ENCODE measurements at regions of chr20 and their contacts with region 1.

Region 1: DNA sequence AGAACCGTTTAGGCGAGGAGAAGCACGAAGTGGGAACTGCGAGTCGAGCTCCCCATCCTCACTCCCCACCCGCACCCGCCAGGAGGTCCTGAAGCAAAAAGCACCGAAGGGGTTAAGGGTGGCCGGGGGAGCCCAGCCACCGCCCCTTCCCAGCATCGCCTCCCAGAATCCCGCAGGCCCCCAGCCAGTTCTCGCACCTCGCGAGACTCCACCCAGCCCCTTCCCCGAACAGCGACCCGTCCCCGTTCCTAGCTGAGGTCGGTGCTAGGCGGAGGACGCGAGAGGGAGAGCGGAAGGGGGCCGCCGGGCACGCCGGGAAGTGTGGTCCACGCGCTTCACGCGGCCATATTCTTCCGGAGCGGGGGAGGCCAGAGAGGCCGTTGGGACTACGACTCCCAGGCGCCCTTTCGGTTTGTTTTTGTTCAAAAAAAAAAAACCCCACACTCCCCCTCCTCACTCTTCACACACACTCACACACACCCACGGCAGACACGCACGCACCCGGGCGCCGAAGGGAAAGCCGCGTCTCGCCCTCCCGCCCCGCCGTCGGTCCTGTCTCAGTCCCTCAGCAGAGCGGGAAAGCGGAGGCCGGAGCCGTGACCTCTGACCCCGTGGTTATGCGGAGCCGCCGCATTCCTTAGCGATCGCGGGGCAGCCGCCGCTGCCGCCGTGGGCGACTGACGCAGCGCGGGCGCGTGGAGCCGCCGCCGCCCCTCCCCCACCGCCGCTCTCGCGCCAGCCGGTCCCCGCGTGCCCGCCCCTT is at the start of gene ASXL1:
- DNase-seq: peak; percentile 98 to 99 (median 99)
- ATAC-seq: peak; percentile 97 to 98 (median 98)
- H3K4me3 ChIP-seq: peak within 1 kb of the TSS; percentile 64 to 97 (median 82)
- H3K27ac ChIP-seq: peak within 1 kb of the TSS; percentile 95 to 100 (median 98)
- H3K4me1 ChIP-seq: peaks cover 0 to 65% (median 23%) of the 10 kb centered on the region in 12 donors
- H3K27me3 ChIP-seq: no peaks in the 10 kb centered on the region
- CTCF ChIP-seq: peak in 3 of 12 donors; percentile 4 to 14 (median 11)
- POLR2A ChIP-seq: peak in 1 of 2 donors; percentile 69
- total RNA-seq, gene ASXL1: 16.8 to 50.1 (median 27.1) TPM

Region 2: GRCh38 chr20:32277361-32278198 is 80.5 kb before region 1 on chr20 and contains the start of gene KIF3B:
- intact Hi-C with region 1: loop called in 1 of 10 experiments (anchors 5 kb)
- DNase-seq: peak; percentile 90 to 93 (median 92)
- ATAC-seq: peak; percentile 88 to 97 (median 96)
- H3K4me3 ChIP-seq: peak within 1 kb of the TSS; percentile 70 to 99 (median 92)
- H3K27ac ChIP-seq: peak within 1 kb of the TSS; percentile 25 to 88 (median 80)
- H3K4me1 ChIP-seq: peaks cover 0 to 26% (median 18%) of the 10 kb centered on the region in 12 donors
- H3K27me3 ChIP-seq: no peaks in the 10 kb centered on the region
- CTCF ChIP-seq: no peak
- POLR2A ChIP-seq: peak in 1 of 2 donors; percentile 70
- total RNA-seq, gene KIF3B: 9.6 to 17.8 (median 11.4) TPM

Region 3: GRCh38 chr20:32296819-32297420 is 61.1 kb before region 1 on chr20:
- intact Hi-C with region 1: no loop called
- DNase-seq: no peak
- ATAC-seq: no peak
- H3K4me3 ChIP-seq: no peak overlapping the region
- H3K27ac ChIP-seq: no peak overlapping the region
- H3K4me1 ChIP-seq: peaks cover 0 to 14% (median 4%) of the 10 kb centered on the region in 12 donors
- H3K27me3 ChIP-seq: no peaks in the 10 kb centered on the region
- CTCF ChIP-seq: no peak
- POLR2A ChIP-seq: no peak

Region 4: GRCh38 chr20:32336918-32337347 is 21.1 kb before region 1 on chr20:
- intact Hi-C with region 1: loop called in 1 of 10 experiments (anchors 2 kb)
- DNase-seq: no peak
- ATAC-seq: no peak
- H3K4me3 ChIP-seq: no peak overlapping the region
- H3K27ac ChIP-seq: no peak overlapping the region
- H3K4me1 ChIP-seq: peaks cover 4 to 46% (median 28%) of the 10 kb centered on the region in 12 donors
- H3K27me3 ChIP-seq: no peaks in the 10 kb centered on the region
- CTCF ChIP-seq: peak; percentile 30 to 67 (median 49)
- POLR2A ChIP-seq: no peak

Region 5: DNA sequence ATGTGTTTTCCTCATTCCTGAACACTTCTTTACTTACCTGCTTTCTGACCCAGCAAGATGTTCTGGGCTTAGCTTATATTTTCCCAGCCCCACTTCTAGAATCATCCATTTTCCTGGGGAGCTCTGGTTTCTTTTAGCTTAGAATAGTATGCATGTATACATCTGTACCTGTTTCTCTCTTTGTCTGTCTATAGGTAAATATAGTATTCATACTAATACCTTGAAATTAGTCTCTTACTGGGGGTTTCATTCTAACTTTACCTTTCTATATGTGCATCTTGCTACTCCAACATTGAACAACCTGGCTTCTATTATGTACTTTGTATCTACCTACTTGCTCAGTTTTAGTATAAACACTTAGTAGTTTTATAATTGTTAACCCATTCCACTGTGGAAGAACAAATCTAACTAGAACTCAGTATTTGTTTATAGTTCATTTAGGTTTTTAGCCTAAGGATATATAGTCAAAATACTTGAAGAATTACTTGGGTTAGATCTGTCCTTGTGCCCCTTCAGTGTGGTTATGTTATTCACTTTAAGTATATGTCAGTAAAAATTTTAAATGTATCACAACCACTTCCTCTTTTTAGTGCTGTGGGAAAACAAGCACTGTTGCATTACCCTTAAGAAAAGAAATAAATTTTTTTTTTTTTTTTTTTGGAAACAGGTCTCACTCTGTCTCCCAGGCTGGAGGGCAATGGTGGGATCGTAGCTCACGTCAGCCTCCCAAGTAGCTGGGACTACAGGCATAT is 54.1 kb after region 1 on chr20:
- intact Hi-C with region 1: no loop called
- DNase-seq: no peak
- ATAC-seq: no peak
- H3K4me3 ChIP-seq: no peak overlapping the region
- H3K27ac ChIP-seq: no peak overlapping the region
- H3K4me1 ChIP-seq: peaks cover 0 to 18% (median 2%) of the 10 kb centered on the region in 12 donors
- H3K27me3 ChIP-seq: no peaks in the 10 kb centered on the region
- CTCF ChIP-seq: no peak
- POLR2A ChIP-seq: no peak

Region 6: GRCh38 chr20:32437391-32438074 is 79.5 kb after region 1 on chr20:
- intact Hi-C with region 1: loop called in 2 of 10 experiments (anchors 5 to 10 kb)
- DNase-seq: no peak
- ATAC-seq: no peak
- H3K4me3 ChIP-seq: no peak overlapping the region
- H3K27ac ChIP-seq: no peak overlapping the region
- H3K4me1 ChIP-seq: peaks cover 4 to 20% (median 14%) of the 10 kb centered on the region in 12 donors
- H3K27me3 ChIP-seq: no peaks in the 10 kb centered on the region
- CTCF ChIP-seq: peak in 1 of 12 donors; percentile 13
- POLR2A ChIP-seq: no peak

Region 7: DNA sequence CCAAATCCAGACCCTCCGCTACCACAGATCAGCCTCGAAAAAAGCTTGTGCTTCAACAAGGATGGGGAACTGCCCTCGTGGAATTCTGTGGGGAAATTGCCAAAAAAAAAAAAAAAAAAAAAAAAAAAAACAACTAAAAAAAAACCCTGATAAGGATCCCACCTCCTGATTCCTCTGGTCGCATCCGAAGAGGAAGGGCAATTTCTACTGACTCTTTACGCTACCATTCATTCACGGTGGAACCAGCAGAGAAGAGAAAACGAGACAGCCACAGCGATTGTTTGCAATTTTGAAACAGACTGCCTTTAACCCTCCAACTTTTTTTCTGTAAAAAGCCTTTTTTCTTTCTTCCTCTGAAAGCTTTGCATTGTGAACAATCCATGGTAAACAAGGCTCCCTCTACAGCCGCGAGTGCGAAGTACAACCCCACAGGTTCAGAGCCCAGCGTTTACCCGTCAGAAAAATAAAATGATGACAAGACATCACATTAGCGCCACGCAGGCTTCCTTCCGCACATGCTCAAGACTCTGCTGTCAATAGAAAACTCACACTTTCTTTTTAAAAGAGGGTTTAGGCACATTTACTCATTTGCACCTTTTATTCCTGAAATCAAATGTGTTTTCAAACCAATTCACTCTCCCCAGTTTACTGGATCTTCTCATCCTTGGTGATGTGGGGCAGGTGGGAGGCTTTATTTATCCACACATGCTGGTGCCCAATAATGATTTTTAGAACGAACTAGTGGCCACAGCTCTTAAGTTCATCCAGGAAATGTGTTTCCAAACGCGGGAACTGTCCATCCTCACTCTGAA is 127.1 kb after region 1 on chr20:
- intact Hi-C with region 1: loop called in 3 of 10 experiments (anchors 2 to 5 kb)
- DNase-seq: peak in 4 of 5 donors; percentile 62 to 78 (median 72)
- ATAC-seq: peak; percentile 27 to 66 (median 50)
- H3K4me3 ChIP-seq: peak overlapping the region; percentile 55 to 99 (median 81)
- H3K27ac ChIP-seq: peak overlapping the region in 11 of 12 donors; percentile 68 to 93 (median 83)
- H3K4me1 ChIP-seq: peaks cover 0 to 41% (median 22%) of the 10 kb centered on the region in 12 donors
- H3K27me3 ChIP-seq: no peaks in the 10 kb centered on the region
- CTCF ChIP-seq: peak; percentile 55 to 92 (median 80)
- POLR2A ChIP-seq: no peak

Measured in heart left ventricle (tissue), 16 donors.